Colonic mucosa (tissue), 4 donors: ENCODE measurements at regions of chr11 and their contacts with region 1.

Region 1: DNA sequence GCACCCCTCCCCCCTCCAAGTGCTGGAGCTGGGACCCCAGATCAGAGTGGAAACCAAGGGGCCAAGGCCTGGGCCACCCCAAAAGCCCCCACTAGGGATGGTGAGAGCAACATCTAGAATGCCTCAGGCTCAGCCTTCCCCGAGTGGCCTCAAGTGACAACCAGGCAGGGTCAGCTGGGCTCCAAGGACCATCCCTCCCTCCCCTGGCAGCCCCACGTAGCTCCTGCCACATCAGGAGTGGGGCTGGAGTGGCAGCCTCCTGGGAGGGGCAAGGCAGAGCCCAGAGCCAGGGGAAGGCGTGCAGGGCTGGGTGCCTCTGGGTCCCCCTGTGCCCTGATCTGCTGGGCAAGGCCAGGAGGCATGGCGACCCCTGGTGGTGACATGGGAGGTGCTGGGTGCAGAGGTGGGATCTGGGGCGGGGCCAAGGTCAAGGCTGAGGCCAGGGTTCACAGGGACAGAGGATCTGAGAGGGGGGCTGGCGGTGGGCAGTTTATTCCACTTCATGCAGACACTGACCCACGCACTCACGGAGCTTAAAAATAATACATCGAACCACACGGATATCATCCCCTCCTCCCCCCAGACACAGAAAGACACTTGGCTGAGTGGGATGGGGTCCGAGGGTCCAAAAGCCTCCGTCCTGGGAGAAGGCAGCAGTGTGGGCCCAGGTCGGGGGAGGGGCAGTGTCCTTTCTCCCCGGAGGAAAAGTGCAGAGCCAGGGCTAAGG is 15.8 kb upstream of the EHD1 start:
- DNase-seq: peak; percentile 96
- H3K4me3 ChIP-seq: peak overlapping the region; percentile 68
- H3K27ac ChIP-seq: peak overlapping the region; percentile 94
- H3K4me1 ChIP-seq: no peaks in the 10 kb centered on the region
- H3K27me3 ChIP-seq: no peaks in the 10 kb centered on the region
- CTCF ChIP-seq: peak; percentile 96

Region 2: DNA sequence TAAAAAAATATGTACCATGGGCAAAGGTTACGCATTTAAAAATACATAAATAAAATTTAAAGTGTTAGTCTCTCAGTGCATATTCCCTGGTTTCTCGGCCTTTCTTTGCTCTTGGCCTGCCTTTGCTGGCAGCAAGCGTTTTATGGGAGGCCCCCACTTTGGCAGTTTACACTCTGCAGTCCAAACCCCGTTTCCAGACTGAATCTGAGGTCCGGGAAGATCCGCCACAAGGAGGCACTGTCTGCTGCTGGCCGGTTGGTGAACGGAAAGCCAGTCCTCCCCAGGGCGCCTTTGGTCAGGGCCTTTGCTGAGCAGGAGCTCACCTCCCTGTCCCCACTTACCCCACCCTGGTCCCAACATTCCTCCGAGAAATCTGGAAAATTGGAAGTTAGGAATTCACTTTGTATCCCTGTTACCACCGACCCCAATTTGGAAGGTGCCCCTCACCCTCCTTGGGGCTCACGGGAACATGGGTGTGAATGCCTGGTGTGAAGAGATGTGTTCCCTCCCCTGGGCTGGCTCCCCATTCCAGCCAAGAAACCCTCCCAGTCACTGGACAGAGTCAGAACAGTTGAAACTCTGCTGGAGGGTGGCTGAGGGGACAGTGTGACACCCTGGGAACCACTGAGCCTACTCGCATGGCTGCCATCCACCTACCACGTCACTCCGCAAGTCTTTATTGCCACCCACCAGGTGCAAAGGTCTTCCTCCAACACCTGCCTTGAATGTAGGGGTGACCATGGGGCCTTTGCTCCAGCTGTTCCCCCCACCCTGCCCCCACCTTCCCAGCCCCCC is 106.5 kb before region 1 on chr11:
- intact Hi-C with region 1: loop called (anchors 5 kb)
- DNase-seq: peak; percentile 80
- H3K4me3 ChIP-seq: no peak overlapping the region
- H3K27ac ChIP-seq: no peak overlapping the region
- H3K4me1 ChIP-seq: no peaks in the 10 kb centered on the region
- H3K27me3 ChIP-seq: no peaks in the 10 kb centered on the region
- CTCF ChIP-seq: peak; percentile 53

Region 3: DNA sequence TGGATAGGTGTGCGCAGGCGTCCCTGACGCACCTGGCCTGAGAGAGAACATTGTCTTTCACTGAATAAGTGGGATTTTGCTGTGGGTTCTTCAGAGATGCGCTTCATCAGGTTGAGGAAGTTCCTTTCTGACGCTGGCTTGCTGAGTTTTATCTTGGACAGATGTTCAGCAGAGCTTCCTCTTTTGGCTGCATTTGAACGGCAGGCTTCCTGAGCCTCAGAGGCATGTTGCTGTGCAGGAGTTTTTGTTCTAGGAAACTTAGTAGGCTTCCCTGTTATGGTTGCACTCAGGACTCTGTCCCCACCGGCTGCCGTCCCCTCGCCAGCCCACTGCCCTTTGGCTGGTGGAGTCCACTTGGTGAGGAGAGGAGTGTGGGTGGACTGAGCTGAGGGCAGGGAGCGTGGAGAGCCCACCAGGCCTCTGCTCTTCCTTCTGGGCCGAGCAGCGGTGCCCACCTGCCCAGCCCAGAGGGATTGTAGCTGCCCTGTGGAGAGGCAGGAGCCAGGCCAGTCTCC is 509.4 kb after region 1 on chr11:
- intact Hi-C with region 1: no loop called
- DNase-seq: no peak
- H3K4me3 ChIP-seq: no peak overlapping the region
- H3K27ac ChIP-seq: no peak overlapping the region
- H3K4me1 ChIP-seq: no peaks in the 10 kb centered on the region
- H3K27me3 ChIP-seq: no peaks in the 10 kb centered on the region
- CTCF ChIP-seq: no peak